PC-9 (cell line): ENCODE measurements at regions of chr4 and their contacts with region 1.

Region 1: DNA sequence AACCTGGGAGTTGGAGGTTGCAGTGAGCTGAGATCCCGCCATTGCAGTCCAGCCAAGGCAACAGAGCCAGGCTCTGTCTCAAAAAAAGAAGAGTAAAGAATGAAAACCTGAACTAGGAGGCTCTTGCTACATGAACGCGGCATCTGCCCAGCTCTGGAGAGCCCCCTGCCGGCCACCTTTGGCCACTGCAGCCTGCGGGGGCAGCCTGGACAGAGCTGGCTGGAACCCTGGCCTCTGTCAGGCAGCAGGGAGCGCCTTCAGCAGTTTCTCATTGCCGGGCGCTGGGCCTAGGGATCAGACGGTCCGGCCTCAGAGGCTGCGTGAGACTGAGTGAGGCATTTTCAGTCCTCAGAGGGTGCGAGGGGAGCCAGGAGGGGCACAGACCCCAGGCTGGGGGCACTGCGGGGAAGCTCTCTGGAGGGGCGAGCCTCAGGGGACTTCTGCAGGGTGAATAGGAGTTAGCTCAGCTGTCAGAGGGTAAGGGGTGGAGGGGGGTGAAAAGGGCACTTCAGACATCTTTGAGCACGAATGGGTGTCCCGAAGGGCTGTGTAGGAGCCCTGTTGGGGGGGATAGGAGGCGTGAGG is 17.5 kb downstream of the DOK7 start:
- DNase-seq: peak; percentile 52 to 85
- H3K4me3 ChIP-seq: no peak overlapping the region
- H3K27ac ChIP-seq: no peak overlapping the region
- H3K4me1 ChIP-seq: peaks cover 17% of the 10 kb centered on the region
- H3K27me3 ChIP-seq: no peaks in the 10 kb centered on the region
- CTCF ChIP-seq: peak; percentile 97

Region 2: DNA sequence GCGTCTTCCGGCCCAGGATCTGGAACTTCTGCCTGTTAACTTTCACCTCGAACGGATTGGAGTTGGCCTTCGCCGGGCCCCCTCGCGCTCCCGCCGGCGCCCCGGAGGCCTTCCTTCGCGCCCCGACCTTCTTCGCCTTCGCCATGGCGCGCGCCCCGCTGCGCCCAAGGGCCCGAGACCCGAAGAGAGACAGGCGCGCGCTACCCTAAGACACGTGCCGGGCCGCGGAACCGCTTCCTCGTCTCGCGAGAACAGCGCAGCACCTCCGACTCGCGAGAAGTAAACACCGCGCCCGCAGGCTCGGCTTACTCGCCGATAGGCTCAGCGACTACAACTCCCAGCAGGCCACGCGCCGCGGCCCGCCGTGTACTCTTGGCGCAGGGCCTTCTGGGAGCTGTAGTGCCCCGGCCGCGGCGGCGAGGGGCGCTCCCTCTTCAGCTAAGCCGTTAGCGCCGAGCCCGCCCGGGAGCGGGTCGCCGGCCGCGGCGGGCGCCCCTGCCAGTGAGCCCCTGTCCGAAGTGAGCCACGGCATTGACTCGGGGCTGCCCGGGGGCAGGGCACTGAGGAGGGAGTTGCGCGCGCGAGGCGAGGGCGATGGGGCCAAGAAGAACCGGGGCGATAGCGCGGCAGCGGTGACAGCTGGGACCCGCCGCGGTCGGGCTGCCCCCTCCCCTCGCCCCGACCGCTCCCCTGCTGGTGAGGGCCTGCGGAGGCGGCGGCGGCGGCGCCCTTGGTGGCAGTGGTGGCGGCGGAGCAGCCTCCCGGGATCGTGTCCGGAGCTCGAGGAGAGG is 517.2 kb before region 1 on chr4 and contains the starts of genes GRK4 and NOP14:
- CTCF ChIA-PET with region 1: no interaction called
- POLR2A ChIA-PET with region 1: interaction called, 10 read pairs
- intact Hi-C with region 1: no loop called
- DNase-seq: peak; percentile 91 to 96
- H3K4me3 ChIP-seq: peak within 1 kb of the TSS; percentile 94
- H3K27ac ChIP-seq: peak within 1 kb of the TSS; percentile 61
- H3K4me1 ChIP-seq: peaks cover 14% of the 10 kb centered on the region
- H3K27me3 ChIP-seq: no peaks in the 10 kb centered on the region
- CTCF ChIP-seq: no peak; the same call in 1 of the 2 replicates
- total RNA-seq, gene GRK4: 3.1 and 4.4 TPM in 2 replicates
- total RNA-seq, gene NOP14: 30.9 and 33.6 TPM in 2 replicates

Region 3: GRCh38 chr4:3292571-3293400 is 187.8 kb before region 1 on chr4 and contains the start of gene RGS12:
- CTCF ChIA-PET with region 1: no interaction called
- POLR2A ChIA-PET with region 1: no interaction called
- intact Hi-C with region 1: loop called (anchors 10 kb)
- DNase-seq: peak; percentile 74 to 95
- H3K4me3 ChIP-seq: peak within 1 kb of the TSS; percentile 78
- H3K27ac ChIP-seq: peak within 1 kb of the TSS; percentile 46
- H3K4me1 ChIP-seq: peaks cover 9% of the 10 kb centered on the region
- H3K27me3 ChIP-seq: no peaks in the 10 kb centered on the region
- CTCF ChIP-seq: no peak
- total RNA-seq, gene RGS12: 36.6 and 37.1 TPM in 2 replicates

Region 4: DNA sequence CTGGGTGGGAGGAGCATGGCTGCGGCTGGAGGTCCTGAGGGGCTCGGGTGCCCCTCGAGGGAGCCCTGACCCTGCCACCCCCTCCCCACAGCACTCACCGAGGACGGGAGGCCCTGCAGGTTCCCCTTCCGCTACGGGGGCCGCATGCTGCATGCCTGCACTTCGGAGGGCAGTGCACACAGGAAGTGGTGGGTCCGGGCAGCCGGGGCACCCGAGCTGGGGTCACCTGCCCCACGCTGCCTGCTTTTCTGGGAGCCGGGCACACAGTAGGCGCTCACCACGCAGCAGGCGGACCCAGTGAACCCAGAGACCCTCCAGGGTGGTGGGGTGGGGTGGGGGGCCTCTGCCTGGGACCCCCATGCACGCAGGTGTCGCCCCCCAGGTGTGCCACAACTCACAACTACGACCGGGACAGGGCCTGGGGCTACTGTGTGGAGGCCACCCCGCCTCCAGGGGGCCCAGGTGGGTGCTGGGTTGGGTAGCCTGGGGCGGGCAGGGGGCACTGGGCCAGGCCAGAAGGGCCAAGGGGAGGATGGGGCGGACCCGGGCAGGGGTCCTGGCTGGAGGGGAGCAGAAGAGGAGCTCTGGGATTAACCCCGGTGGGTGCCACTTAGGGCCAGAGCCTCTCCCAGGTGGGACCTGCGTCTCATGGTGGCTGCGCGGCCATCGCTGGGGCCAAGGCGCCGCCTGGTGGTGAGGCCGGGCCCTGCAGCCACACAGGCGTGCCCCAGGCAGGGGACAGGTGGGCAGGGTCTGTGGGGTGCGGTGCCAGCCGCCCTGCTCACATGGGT is 37.5 kb before region 1 on chr4:
- CTCF ChIA-PET with region 1: no interaction called
- POLR2A ChIA-PET with region 1: no interaction called
- intact Hi-C with region 1: loop called (anchors 2 kb)
- DNase-seq: peak in 1 of 2 experiments; percentile 68
- H3K4me3 ChIP-seq: no peak overlapping the region
- H3K27ac ChIP-seq: no peak overlapping the region
- H3K4me1 ChIP-seq: no peaks in the 10 kb centered on the region
- H3K27me3 ChIP-seq: no peaks in the 10 kb centered on the region
- CTCF ChIP-seq: peak; percentile 89